Sciatic nerve (tissue), 2 donors: ENCODE measurements at regions of chr10 and their contacts with region 1.

Region 1: DNA sequence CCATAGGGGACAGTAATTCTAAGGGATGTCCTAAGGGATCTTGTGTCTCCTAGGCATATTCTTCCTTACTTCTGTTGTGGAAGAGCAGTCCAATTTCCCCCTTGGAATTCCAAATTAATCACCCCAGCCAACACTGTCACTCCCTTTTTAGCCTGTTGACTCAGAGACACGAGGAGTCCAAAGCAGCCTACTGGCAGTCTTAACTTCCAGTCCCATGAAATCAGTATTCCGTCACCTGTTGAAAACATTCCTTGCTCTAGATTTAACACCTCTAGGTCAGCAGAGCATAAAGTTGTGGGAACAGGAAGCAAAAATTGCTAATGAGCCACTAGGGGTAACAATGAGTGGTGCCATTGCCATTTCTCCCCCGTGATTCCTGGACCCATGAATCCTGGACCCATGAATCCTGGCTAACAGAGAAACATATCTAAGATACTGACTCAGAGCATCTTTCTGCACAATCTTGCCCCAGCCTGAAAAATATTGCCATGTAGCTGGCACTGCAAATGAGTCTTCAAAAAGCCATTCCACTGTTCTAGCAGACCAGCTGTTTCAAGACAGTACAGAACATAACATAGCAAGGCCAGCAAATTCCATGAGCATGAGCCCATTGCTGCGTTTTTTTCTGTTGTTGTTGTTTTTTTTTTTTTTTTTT is 252.7 kb upstream of the PTER start:
- DNase-seq: no peak
- ATAC-seq: no peak

Region 2: DNA sequence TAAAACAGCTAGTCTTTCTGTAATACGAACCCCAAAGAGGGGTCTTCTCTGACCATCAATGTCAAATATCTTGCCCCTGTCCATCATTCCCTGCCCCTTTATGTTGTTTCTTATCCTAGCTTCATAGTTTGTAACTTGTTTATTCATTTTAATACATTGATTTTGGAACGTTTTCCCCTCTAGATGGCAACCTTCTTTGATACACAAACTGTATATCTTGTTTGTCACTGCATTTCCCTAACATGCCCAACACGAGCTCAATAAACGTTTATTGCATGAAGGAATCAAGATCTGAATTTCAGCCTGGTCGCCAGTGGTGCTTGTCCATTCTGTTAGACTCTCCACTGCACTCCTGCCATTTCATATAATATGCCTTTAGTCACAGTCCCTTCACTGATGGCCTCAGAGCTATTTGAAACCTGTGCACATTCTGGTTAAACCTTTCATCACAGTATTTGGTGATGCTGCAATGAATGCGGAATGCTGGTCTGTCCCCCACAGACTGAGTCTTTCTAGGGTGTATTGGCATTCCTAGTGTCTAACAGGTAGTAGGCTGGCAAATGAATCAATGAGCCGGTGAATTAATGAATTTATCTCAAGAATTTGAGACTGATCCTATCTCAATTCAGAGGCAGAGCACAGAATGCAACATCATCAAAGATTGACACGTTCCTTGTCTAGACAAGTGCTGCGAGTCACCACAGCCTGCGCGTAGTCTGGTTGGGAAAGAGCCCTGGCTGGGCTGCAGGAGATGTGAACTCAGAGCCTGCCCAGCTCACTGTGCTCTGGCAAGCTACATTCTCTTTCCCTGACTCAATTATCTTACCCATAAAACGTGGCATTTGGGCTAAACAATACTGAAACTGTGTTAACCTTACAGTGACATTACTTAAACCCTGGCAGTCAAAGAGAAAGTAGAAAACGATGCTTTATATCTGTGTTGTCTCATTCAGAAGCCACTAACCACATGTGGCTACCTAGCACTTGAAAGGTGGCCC is 1798.2 kb before region 1 on chr10:
- intact Hi-C with region 1: no loop called
- DNase-seq: no peak
- ATAC-seq: no peak

Region 3: GRCh38 chr10:16155834-16156233 is 28.3 kb before region 1 on chr10:
- intact Hi-C with region 1: loop called (anchors 1 kb)
- DNase-seq: no peak
- ATAC-seq: no peak

Region 4: DNA sequence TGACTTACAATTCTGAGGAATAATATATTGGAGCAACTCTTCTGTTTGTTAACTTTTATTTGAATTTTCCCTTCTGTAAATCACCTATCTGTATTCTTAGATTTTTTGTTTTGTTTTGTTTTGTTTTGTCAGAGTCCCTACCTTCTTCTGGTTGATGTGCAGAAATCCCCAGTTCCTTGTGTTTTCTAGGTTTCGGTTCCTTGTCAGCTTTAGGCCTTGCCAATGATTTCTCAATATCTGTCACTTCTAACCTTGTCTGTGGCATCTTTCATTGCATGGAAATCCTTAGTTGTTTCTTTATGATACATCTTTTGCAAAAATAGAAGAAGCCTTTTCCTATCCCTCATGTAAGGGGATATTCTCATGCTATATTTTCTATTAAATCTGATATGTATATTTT is 1292.0 kb after region 1 on chr10:
- intact Hi-C with region 1: no loop called
- DNase-seq: no peak
- ATAC-seq: no peak

Region 5: DNA sequence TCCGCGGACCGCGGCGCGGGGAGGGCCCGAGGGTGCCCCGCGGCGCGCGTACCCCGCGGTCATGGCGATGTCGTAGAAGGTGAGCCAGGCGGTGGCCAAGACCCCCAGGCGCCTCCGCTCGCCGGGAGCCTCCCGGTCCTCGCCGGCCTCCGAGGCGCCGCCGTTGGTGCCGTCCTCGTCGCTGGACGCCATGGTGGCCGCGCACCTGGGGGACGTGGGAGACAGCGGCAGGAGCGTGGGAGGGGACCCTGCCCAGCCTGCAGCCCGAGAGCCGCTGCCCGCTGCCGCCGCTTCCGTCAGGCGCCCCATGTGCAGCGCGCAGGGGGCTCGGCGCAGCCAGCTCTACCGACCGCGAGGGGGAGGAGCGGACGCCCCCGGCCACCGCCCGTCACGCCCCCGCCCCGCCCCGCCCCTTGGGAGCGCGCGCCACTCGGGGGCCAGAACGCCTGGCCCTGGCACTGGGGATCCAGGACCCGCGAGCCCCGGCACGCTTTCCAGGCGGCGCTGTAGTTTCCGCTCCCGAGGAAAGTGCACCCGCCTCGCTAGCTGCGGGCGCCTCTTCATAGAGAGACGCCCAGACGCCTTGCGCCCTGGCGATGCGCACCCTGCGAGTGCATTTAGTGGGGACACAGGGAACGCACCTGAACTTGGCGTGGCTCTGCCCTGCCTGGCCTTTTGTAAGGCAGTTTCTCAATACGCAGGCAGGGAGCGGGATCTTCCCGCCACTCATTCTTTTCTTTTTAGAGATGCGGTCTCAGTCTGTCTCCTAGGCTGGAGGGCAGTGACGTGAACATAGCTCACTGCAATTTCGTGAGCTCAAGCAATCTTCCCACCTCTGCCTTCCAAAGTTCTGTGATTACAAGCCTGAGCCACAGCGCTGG is 1433.2 kb after region 1 on chr10 and contains the start of gene HACD1:
- intact Hi-C with region 1: no loop called
- DNase-seq: peak; percentile 70
- ATAC-seq: peak; percentile 74
- total RNA-seq, gene HACD1: 3.0 TPM